ENCODE measurements at regions of chr14 and their contacts with region 1.

Region 1: GRCh38 chr14:67599698-67600561 is at the start of gene PIGH:
- DNase-seq: peak; percentile 94
- H3K4me3 ChIP-seq: peak within 1 kb of the TSS; percentile 77 to 96 (median 90)
- H3K27ac ChIP-seq: peak within 1 kb of the TSS; percentile 88 to 96 (median 94)
- H3K4me1 ChIP-seq: peaks cover 0 to 17% (median 8%) of the 10 kb centered on the region in 4 donors
- H3K27me3 ChIP-seq: no peaks in the 10 kb centered on the region
- CTCF ChIP-seq: peak; percentile 35 to 56 (median 46)
- EP300 ChIP-seq: no peak
- POLR2A ChIP-seq: peak; percentile 56 to 80
- total RNA-seq, gene PIGH: 15.2 to 32.9 (median 24.4) TPM

Region 2: GRCh38 chr14:67487937-67488893 is 111.7 kb before region 1 on chr14 and contains the start of gene TMEM229B:
- intact Hi-C with region 1: no loop called
- DNase-seq: no peak
- H3K4me3 ChIP-seq: peak within 1 kb of the TSS in 3 of 4 donors; percentile 16 to 35 (median 33)
- H3K27ac ChIP-seq: peak within 1 kb of the TSS in 3 of 4 donors; percentile 27 to 48 (median 33)
- H3K4me1 ChIP-seq: no peaks in the 10 kb centered on the region
- H3K27me3 ChIP-seq: no peaks in the 10 kb centered on the region
- CTCF ChIP-seq: no peak
- EP300 ChIP-seq: no peak
- POLR2A ChIP-seq: no peak
- total RNA-seq, gene TMEM229B: 5.6 to 16.4 (median 6.1) TPM

Region 3: DNA sequence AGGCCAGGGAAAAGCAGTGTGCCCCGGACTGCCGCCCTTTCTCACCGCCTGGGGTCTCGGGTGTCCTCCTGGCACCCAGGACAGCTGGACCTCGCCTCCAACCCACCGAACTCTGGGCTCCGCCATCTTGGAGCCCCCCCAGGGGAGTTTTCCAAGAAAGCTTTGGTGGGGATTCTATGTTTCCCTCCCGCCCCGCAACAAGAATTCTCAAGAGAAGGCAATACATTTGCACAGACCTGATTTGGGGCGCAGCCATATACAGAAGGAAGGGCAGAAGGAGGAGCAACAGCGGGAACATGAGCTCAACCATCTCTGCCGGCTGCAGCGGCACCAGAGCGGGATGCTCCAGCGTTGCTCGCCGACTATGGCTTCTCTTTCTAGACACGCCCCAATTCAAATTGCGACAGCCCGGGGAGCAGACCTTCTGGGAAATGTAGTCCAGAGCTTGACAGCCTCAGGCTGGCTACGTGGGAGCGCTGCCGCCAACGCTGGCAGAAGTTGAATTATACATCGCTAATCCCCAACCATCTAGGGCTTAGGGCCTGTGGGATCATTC is 95.5 kb after region 1 on chr14 and contains the start of gene RDH11:
- intact Hi-C with region 1: loop called (anchors 5 kb)
- DNase-seq: peak; percentile 93
- H3K4me3 ChIP-seq: peak within 1 kb of the TSS; percentile 85 to 95 (median 89)
- H3K27ac ChIP-seq: peak within 1 kb of the TSS; percentile 81 to 90 (median 86)
- H3K4me1 ChIP-seq: peaks cover 4 to 23% (median 17%) of the 10 kb centered on the region in 4 donors
- H3K27me3 ChIP-seq: no peaks in the 10 kb centered on the region
- CTCF ChIP-seq: no peak
- EP300 ChIP-seq: no peak
- POLR2A ChIP-seq: peak; percentile 90 to 91
- total RNA-seq, gene RDH11: 24.7 to 49.0 (median 38.5) TPM

Measured in sigmoid colon (tissue), 7 donors.